ENCODE measurements at regions of chr5 and their contacts with region 1.

Region 1: DNA sequence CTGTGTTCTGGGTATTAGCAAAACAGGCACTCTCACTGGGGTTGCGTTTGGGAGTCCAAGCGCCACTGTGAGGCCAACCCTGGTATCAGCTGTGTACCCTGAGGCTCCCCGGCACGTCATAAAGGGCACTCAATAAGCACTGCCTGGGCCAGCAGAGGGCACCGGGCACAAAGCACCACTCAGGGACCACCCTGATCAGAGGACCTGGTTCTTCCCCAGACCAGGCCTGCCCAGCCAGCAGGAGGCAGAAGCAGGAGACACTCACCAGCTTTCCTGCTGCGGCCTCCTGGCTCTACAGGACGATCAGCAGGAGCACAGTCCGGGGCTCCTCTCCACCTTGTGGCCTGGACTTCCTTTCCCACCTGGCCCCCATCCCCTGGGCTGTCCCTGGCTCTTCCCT is 12.6 kb downstream of the MGAT1 start:
- DNase-seq: no peak
- ATAC-seq: no peak
- H3K4me3 ChIP-seq: no peak overlapping the region
- H3K27ac ChIP-seq: peak overlapping the region in 1 of 4 donors; percentile 27
- H3K4me1 ChIP-seq: peaks cover 21 to 24% of the 10 kb centered on the region in 2 donors
- H3K27me3 ChIP-seq: no peaks in the 10 kb centered on the region
- CTCF ChIP-seq: no peak
- POLR2A ChIP-seq: no peak

Region 2: GRCh38 chr5:180809403-180810209 is 19.6 kb after region 1 on chr5:
- in situ Hi-C with region 1: no loop called
- intact Hi-C with region 1: no loop called
- DNase-seq: peak; percentile 88
- ATAC-seq: peak; percentile 76 to 77
- H3K4me3 ChIP-seq: peak overlapping the region; percentile 74 to 94 (median 79)
- H3K27ac ChIP-seq: peak overlapping the region; percentile 94 to 100 (median 100)
- H3K4me1 ChIP-seq: peaks cover 51 to 60% of the 10 kb centered on the region in 2 donors
- H3K27me3 ChIP-seq: no peaks in the 10 kb centered on the region
- CTCF ChIP-seq: no peak
- POLR2A ChIP-seq: no peak

Region 3: DNA sequence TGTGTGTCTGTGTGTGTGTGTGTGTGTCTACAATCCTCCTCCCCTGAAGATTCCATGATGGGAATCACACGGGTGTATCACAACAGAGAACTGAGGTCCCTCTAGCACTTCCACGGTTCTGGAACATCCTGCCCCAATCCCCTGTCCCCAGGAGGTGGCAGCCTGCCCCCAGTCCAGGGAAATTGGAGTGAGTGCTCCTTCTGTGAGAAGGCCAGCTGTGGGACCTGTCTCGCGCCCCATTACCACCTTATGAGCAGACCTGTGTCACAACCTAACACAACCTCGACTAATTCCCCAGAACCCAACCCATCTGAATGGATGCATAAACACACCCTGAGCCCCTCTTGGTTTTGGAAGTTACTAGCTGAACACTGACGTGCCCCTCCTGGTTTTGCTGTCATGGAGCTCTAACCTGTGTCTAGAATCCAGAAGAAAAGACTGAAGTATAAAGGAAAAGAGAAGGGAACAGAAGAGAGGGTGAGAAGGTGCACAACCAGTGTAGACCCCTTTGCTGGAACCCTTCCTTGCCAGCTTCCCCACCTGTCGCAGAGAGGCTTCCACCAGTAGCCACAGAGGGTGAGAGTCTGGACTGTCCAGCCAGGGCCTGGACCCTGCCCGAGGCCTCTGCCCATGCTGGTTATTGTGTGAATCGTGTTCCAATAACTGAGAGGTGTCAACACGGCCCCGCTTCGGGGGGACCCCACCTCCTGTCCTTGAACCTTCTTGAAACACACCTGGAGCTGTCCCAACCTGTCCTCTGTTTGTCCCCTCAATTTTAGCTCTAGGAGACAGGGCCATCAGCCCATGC is 253.5 kb after region 1 on chr5:
- in situ Hi-C with region 1: no loop called
- intact Hi-C with region 1: loop called (anchors 5 kb)
- DNase-seq: no peak
- ATAC-seq: peak in 1 of 2 donors; percentile 19
- H3K4me3 ChIP-seq: peak overlapping the region in 3 of 4 donors; percentile 42 to 55 (median 43)
- H3K27ac ChIP-seq: peak overlapping the region; percentile 49 to 80 (median 73)
- H3K4me1 ChIP-seq: no peaks in the 10 kb centered on the region
- H3K27me3 ChIP-seq: peaks cover 0 to 21% (median 7%) of the 10 kb centered on the region in 3 donors
- CTCF ChIP-seq: no peak
- POLR2A ChIP-seq: no peak